Common myeloid progenitor, CD34-positive (primary cell): ENCODE measurements at regions of chr1 and their contacts with region 1.

Region 1: GRCh38 chr1:100921109-100921706 is 25.3 kb downstream of the SLC30A7 start:
- DNase-seq: peak; percentile 53 to 67 (median 58)
- H3K4me3 ChIP-seq: no peak overlapping the region
- H3K27ac ChIP-seq: no peak overlapping the region
- H3K4me1 ChIP-seq: no peaks in the 10 kb centered on the region
- H3K27me3 ChIP-seq: no peaks in the 10 kb centered on the region

Region 2: DNA sequence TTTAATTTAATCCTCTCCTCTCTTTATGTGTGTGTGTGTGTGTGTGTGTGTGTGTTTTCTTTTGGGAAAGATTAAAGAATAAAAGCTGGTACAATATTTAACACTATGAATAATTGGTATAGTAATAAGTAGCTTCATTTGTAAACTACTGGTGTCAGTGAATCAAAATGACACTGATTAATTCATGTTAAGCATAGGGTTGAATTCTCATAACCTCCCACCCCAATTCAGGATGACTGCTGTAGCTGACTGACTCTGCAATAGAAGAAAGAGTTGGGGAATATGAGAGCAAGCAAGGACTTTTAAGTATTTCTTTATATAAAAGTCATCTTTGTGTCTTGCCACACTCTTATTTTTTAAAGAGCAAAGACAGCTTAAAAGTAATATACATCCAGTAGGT is 12.2 kb before region 1 on chr1:
- CTCF ChIA-PET with region 1: interaction called, 11 read pairs
- POLR2A ChIA-PET with region 1: no interaction called
- DNase-seq: no peak
- H3K4me3 ChIP-seq: no peak overlapping the region
- H3K27ac ChIP-seq: no peak overlapping the region
- H3K4me1 ChIP-seq: no peaks in the 10 kb centered on the region
- H3K27me3 ChIP-seq: no peaks in the 10 kb centered on the region